Activated naive CD4-positive, alpha-beta T cell treated with anti-CD3 and anti-CD28 coated beads for 36 hours (primary cell): ENCODE measurements at regions of chr15 and their contacts with region 1.

Region 1: DNA sequence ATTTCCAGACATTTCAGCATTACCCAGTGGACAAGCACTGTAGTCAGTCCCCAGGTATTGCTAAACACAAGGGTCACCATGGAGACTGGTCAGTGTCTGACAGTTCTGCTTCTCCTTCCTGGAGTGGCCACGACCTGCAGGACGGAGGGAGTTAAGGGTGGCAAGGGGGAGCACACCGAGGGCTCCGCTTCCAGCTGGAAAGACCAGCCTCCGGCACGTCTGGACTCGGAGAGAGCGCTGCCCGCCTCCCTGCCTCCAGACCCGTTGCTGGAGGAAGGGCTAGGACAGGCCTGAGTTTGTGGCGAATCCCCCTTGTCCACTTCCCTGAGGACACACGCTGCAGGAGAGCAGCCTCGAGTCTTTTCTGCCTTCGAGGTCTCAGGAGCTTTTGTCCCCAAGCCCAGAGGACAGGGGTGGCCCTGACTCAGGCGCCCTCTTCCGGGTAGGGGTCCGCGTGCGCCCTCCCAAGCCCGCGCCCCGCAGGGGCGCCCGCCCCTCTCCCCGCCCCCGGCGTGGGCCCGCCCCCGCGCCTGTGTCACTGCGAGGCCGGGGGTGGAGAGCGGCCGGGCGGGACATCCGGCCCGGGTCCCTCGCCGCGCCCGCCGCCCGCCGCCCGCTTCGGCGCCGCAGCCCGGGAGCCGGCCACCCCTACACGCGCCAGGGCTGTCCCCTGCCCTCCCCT is at the start of gene CHST14:
- DNase-seq: peak; percentile 43
- H3K4me3 Mint-ChIP-seq: peak within 1 kb of the TSS; percentile 83
- H3K27ac Mint-ChIP-seq: peak within 1 kb of the TSS; percentile 25
- H3K4me1 Mint-ChIP-seq: peaks cover 28% of the 10 kb centered on the region
- H3K27me3 Mint-ChIP-seq: no peaks in the 10 kb centered on the region
- total RNA-seq, gene CHST14: 4.4 to 4.6 TPM

Region 2: GRCh38 chr15:40452296-40453090 is 18.1 kb before region 1 on chr15:
- CTCF ChIA-PET with region 1: interaction called, 3 read pairs
- intact Hi-C with region 1: loop called (anchors 2 kb)
- DNase-seq: peak; percentile 39
- H3K4me3 Mint-ChIP-seq: no peak overlapping the region
- H3K27ac Mint-ChIP-seq: peak overlapping the region; percentile 33
- H3K4me1 Mint-ChIP-seq: peaks cover 83% of the 10 kb centered on the region
- H3K27me3 Mint-ChIP-seq: no peaks in the 10 kb centered on the region

Region 3: GRCh38 chr15:40493089-40493840 is 22.7 kb after region 1 on chr15:
- CTCF ChIA-PET with region 1: no interaction called
- intact Hi-C with region 1: loop called (anchors 1 kb)
- DNase-seq: peak; percentile 83
- H3K4me3 Mint-ChIP-seq: peak overlapping the region; percentile 4
- H3K27ac Mint-ChIP-seq: peak overlapping the region; percentile 14
- H3K4me1 Mint-ChIP-seq: peaks cover 28% of the 10 kb centered on the region
- H3K27me3 Mint-ChIP-seq: peaks cover under 1% of the 10 kb centered on the region

Region 4: GRCh38 chr15:40506964-40507571 is 36.5 kb after region 1 on chr15:
- CTCF ChIA-PET with region 1: interaction called, 6 read pairs
- intact Hi-C with region 1: loop called (anchors 2 kb)
- DNase-seq: peak; percentile 75
- H3K4me3 Mint-ChIP-seq: no peak overlapping the region
- H3K27ac Mint-ChIP-seq: no peak overlapping the region
- H3K4me1 Mint-ChIP-seq: peaks cover 9% of the 10 kb centered on the region
- H3K27me3 Mint-ChIP-seq: peaks cover 34% of the 10 kb centered on the region